ENCODE measurements at regions of chr2 and their contacts with region 1.

Region 1: GRCh38 chr2:226813148-226813701 is 13.6 kb upstream of the IRS1 start:
- DNase-seq: no peak
- H3K4me3 ChIP-seq: no peak overlapping the region
- H3K4me3 Mint-ChIP-seq: no peak overlapping the region
- H3K27ac ChIP-seq: no peak overlapping the region
- H3K27ac Mint-ChIP-seq: no peak overlapping the region
- H3K4me1 ChIP-seq: no peaks in the 10 kb centered on the region
- H3K4me1 Mint-ChIP-seq: no peaks in the 10 kb centered on the region
- H3K27me3 ChIP-seq: no peaks in the 10 kb centered on the region
- H3K27me3 Mint-ChIP-seq: peaks cover 19 to 32% of the 10 kb centered on the region in 2 donors

Region 2: GRCh38 chr2:227106845-227107759 is 293.9 kb after region 1 on chr2:
- CTCF ChIA-PET with region 1: no interaction called
- POLR2A ChIA-PET with region 1: no interaction called
- intact Hi-C with region 1: loop called (anchors 2 kb)
- DNase-seq: peak in 4 of 5 donors; percentile 10 to 24 (median 18)
- H3K4me3 ChIP-seq: no peak overlapping the region
- H3K4me3 Mint-ChIP-seq: no peak overlapping the region
- H3K27ac ChIP-seq: no peak overlapping the region
- H3K27ac Mint-ChIP-seq: no peak overlapping the region
- H3K4me1 ChIP-seq: no peaks in the 10 kb centered on the region
- H3K4me1 Mint-ChIP-seq: no peaks in the 10 kb centered on the region
- H3K27me3 ChIP-seq: no peaks in the 10 kb centered on the region
- H3K27me3 Mint-ChIP-seq: peaks cover 3 to 7% of the 10 kb centered on the region in 2 donors